CD8-positive, alpha-beta memory T cell (primary cell): ENCODE measurements at regions of chr4 and their contacts with region 1.

Region 1: GRCh38 chr4:121199742-121200561 is 35.8 kb upstream of the TNIP3 start:
- DNase-seq: peak in 3 of 5 donors; percentile 18 to 73 (median 41)
- H3K4me3 ChIP-seq: no peak overlapping the region
- H3K4me3 Mint-ChIP-seq: peak overlapping the region; percentile 42 to 85 (median 76)
- H3K27ac ChIP-seq: no peak overlapping the region
- H3K27ac Mint-ChIP-seq: peak overlapping the region; percentile 23 to 99 (median 91)
- H3K4me1 ChIP-seq: peaks cover 25% of the 10 kb centered on the region
- H3K4me1 Mint-ChIP-seq: peaks cover 27 to 52% (median 39%) of the 10 kb centered on the region in 3 donors
- H3K27me3 ChIP-seq: no peaks in the 10 kb centered on the region
- H3K27me3 Mint-ChIP-seq: no peaks in the 10 kb centered on the region

Region 2: GRCh38 chr4:121168446-121169281 is 31.3 kb before region 1 on chr4:
- CTCF ChIA-PET with region 1: no interaction called
- POLR2A ChIA-PET with region 1: no interaction called
- DNase-seq: no peak
- H3K4me3 ChIP-seq: no peak overlapping the region
- H3K4me3 Mint-ChIP-seq: no peak overlapping the region
- H3K27ac ChIP-seq: no peak overlapping the region
- H3K27ac Mint-ChIP-seq: peak overlapping the region in 2 of 8 donors; percentile 18 to 75
- H3K4me1 ChIP-seq: peaks cover 27% of the 10 kb centered on the region
- H3K4me1 Mint-ChIP-seq: peaks cover 30 to 51% (median 44%) of the 10 kb centered on the region in 3 donors
- H3K27me3 ChIP-seq: no peaks in the 10 kb centered on the region
- H3K27me3 Mint-ChIP-seq: no peaks in the 10 kb centered on the region

Region 3: GRCh38 chr4:121217351-121217750 is 17.4 kb after region 1 on chr4:
- CTCF ChIA-PET with region 1: interaction called, 22 read pairs
- POLR2A ChIA-PET with region 1: interaction called, 9 read pairs
- DNase-seq: no peak
- H3K4me3 ChIP-seq: no peak overlapping the region
- H3K4me3 Mint-ChIP-seq: peak overlapping the region in 3 of 7 donors; percentile 0 to 73 (median 4)
- H3K27ac ChIP-seq: no peak overlapping the region
- H3K27ac Mint-ChIP-seq: peak overlapping the region in 7 of 8 donors; percentile 9 to 96 (median 93)
- H3K4me1 ChIP-seq: peaks cover 35% of the 10 kb centered on the region
- H3K4me1 Mint-ChIP-seq: peaks cover 49 to 88% (median 69%) of the 10 kb centered on the region in 3 donors
- H3K27me3 ChIP-seq: no peaks in the 10 kb centered on the region
- H3K27me3 Mint-ChIP-seq: no peaks in the 10 kb centered on the region

Region 4: DNA sequence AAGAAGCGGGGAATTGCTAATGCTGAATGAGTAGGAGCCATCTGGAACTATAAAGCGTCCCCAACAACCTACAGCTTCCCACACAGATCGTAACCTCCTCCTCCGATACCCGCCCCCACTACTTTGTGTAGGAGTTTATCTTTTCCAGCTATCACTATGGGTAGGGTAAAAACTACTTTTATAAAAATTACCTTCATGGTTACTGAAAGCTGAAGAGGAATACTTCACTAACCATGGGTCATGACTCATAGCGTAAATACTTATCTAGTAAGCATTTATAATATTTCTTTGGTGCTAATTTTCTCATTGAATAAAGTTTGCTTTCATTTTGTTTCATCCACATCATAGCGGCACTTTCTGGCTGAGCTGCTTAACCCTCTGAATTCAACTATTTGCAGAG is 43.5 kb after region 1 on chr4:
- CTCF ChIA-PET with region 1: interaction called, 14 read pairs
- POLR2A ChIA-PET with region 1: no interaction called
- DNase-seq: no peak
- H3K4me3 ChIP-seq: peak overlapping the region; percentile 16
- H3K4me3 Mint-ChIP-seq: peak overlapping the region; percentile 74 to 89 (median 85)
- H3K27ac ChIP-seq: no peak overlapping the region
- H3K27ac Mint-ChIP-seq: peak overlapping the region in 6 of 8 donors; percentile 21 to 83 (median 66)
- H3K4me1 ChIP-seq: peaks cover 8% of the 10 kb centered on the region
- H3K4me1 Mint-ChIP-seq: peaks cover 13 to 32% (median 21%) of the 10 kb centered on the region in 3 donors
- H3K27me3 ChIP-seq: no peaks in the 10 kb centered on the region
- H3K27me3 Mint-ChIP-seq: no peaks in the 10 kb centered on the region

Region 5: DNA sequence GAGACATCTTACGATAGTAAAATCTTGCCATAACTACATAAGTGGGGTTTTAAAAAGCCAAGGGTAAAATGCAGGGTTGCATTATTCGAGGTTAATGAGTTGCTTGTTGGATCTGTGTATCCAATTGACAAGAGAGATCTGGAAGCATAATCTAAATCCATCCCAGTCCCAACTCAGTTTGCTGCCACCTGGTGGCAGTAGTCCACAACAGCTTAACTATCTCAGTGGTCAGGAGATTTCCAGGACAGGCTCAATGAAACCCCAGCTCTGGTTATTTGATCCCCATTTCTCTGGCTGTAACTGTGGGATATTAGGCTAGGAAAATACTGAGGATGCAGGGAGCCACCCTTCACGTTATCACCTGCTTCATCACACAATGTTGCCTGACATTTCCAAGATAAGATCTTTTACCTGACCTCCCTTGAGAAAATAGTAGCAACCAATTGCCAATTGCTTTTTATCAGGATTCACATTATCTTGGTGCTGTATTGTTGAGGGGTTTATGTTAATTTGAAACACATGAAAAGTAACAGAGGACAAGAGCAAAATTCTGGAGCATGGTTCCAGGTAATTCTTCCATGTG is 52.4 kb after region 1 on chr4:
- CTCF ChIA-PET with region 1: interaction called, 14 read pairs
- POLR2A ChIA-PET with region 1: interaction called, 3 read pairs
- DNase-seq: peak; percentile 36 to 72 (median 39)
- H3K4me3 ChIP-seq: no peak overlapping the region
- H3K4me3 Mint-ChIP-seq: peak overlapping the region in 3 of 7 donors; percentile 2 to 67 (median 36)
- H3K27ac ChIP-seq: no peak overlapping the region
- H3K27ac Mint-ChIP-seq: peak overlapping the region; percentile 48 to 86 (median 78)
- H3K4me1 ChIP-seq: peaks cover 50% of the 10 kb centered on the region
- H3K4me1 Mint-ChIP-seq: peaks cover 50 to 71% (median 65%) of the 10 kb centered on the region in 3 donors
- H3K27me3 ChIP-seq: no peaks in the 10 kb centered on the region
- H3K27me3 Mint-ChIP-seq: no peaks in the 10 kb centered on the region

Region 6: GRCh38 chr4:121307445-121308327 is 107.7 kb after region 1 on chr4:
- CTCF ChIA-PET with region 1: interaction called, 15 read pairs
- POLR2A ChIA-PET with region 1: interaction called, 3 read pairs
- DNase-seq: peak; percentile 5 to 56 (median 33)
- H3K4me3 ChIP-seq: no peak overlapping the region
- H3K4me3 Mint-ChIP-seq: peak overlapping the region in 3 of 7 donors; percentile 27 to 50 (median 28)
- H3K27ac ChIP-seq: no peak overlapping the region
- H3K27ac Mint-ChIP-seq: peak overlapping the region in 6 of 8 donors; percentile 13 to 72 (median 62)
- H3K4me1 ChIP-seq: peaks cover 8% of the 10 kb centered on the region
- H3K4me1 Mint-ChIP-seq: peaks cover 13 to 18% (median 15%) of the 10 kb centered on the region in 3 donors
- H3K27me3 ChIP-seq: no peaks in the 10 kb centered on the region
- H3K27me3 Mint-ChIP-seq: no peaks in the 10 kb centered on the region